Activated CD4-positive, alpha-beta T cell treated with anti-CD3 and anti-CD28 coated beads, Interleukin-2, amount 10 ng/mL, durations not matched to agents 24 days and 14 days (primary cell): ENCODE measurements at regions of chr4 and their contacts with region 1.

Region 1: DNA sequence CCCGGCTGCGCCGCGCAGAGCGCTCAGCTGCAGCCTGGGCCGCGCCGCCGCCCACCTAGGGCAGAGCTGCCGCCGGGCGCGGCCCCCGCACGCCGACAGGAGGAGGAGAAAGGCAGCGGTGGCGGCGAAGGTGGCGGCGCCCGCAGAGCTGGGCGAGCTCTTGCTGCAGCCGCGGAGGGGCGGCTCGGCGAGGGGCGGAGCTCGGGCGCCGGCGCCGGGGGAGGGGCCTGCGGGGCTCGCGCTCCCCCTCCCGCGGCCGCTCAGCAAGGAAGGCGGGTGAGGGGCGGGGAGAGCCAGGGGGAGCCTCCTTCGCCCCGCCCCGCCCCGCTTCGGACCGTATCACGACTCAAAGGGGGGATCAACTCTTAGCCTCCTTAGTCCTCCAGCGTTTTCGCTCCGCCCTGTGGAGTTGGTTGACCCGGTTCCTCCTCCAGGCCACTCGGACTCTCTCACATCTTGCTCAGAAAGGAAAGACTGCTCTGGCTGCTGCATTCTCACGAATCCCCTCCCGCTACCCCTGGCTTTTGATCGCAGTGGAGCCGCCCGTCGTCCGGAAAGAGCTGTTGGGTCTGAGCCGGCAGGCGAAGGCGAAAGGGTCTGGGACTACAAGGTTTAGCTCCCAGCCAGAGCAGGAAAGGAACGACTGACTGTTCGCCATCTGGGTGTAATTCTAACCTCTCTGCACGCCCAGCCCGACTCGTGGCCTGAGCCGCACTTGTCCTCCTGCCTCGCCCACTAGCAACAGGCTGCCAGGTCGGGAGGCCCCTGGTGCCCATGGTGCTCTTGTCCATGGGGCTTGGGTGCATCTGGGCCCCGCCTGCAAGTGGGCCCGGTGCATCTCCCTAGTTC is at the start of gene ATP8A1:
- DNase-seq: peak; percentile 98
- H3K4me3 Mint-ChIP-seq: peak within 1 kb of the TSS; percentile 97
- H3K27ac Mint-ChIP-seq: peak within 1 kb of the TSS; percentile 98
- H3K4me1 Mint-ChIP-seq: peaks cover 42% of the 10 kb centered on the region
- H3K27me3 Mint-ChIP-seq: peaks cover 2% of the 10 kb centered on the region
- total RNA-seq, gene ATP8A1: 21.8 and 24.3 TPM in 2 replicates

Region 2: GRCh38 chr4:42396752-42397634 is 260.2 kb before region 1 on chr4 and contains the start of gene SHISA3:
- intact Hi-C with region 1: loop called (anchors 10 kb)
- DNase-seq: peak; percentile 78
- H3K4me3 Mint-ChIP-seq: peak within 1 kb of the TSS; percentile 85
- H3K27ac Mint-ChIP-seq: no peak within 1 kb of the TSS
- H3K4me1 Mint-ChIP-seq: peaks cover 25% of the 10 kb centered on the region
- H3K27me3 Mint-ChIP-seq: peaks cover 65% of the 10 kb centered on the region
- total RNA-seq, gene SHISA3: 0.09 and 0.23 TPM in 2 replicates

Region 3: DNA sequence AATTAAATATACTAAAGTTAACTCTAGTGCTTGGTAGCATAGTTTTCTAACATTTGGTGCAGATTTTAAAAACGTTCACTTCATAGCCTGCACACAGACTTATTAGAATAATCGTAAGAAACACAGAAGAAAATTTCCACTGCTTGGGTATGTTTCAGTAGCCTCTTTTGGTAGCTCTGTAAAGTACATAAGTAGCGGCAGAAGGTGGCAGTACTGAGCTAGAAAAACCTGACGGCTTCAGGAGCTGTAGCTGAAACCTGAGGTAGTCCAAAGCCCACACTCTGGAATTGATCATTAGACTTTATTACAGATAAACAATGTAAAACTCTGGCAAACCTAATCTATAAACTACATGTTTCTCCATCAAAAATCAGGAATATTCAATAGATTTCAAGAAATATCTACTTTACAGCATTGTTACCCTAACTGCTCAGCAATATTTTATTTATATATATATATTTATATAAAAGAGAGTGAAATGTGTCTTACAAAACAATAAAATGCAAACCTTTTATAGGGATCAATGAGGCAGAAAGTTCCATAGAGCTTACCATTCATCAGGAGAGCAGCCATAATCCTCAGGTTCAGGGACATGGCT is 88.5 kb before region 1 on chr4:
- intact Hi-C with region 1: loop called (anchors 2 kb)
- DNase-seq: peak; percentile 89
- H3K4me3 Mint-ChIP-seq: no peak overlapping the region
- H3K27ac Mint-ChIP-seq: no peak overlapping the region
- H3K4me1 Mint-ChIP-seq: no peaks in the 10 kb centered on the region
- H3K27me3 Mint-ChIP-seq: no peaks in the 10 kb centered on the region

Region 4: GRCh38 chr4:42579903-42580302 is 77.3 kb before region 1 on chr4:
- intact Hi-C with region 1: loop called (anchors 1 kb)
- DNase-seq: no peak
- H3K4me3 Mint-ChIP-seq: no peak overlapping the region
- H3K27ac Mint-ChIP-seq: no peak overlapping the region
- H3K4me1 Mint-ChIP-seq: peaks cover 7% of the 10 kb centered on the region
- H3K27me3 Mint-ChIP-seq: no peaks in the 10 kb centered on the region

Region 5: DNA sequence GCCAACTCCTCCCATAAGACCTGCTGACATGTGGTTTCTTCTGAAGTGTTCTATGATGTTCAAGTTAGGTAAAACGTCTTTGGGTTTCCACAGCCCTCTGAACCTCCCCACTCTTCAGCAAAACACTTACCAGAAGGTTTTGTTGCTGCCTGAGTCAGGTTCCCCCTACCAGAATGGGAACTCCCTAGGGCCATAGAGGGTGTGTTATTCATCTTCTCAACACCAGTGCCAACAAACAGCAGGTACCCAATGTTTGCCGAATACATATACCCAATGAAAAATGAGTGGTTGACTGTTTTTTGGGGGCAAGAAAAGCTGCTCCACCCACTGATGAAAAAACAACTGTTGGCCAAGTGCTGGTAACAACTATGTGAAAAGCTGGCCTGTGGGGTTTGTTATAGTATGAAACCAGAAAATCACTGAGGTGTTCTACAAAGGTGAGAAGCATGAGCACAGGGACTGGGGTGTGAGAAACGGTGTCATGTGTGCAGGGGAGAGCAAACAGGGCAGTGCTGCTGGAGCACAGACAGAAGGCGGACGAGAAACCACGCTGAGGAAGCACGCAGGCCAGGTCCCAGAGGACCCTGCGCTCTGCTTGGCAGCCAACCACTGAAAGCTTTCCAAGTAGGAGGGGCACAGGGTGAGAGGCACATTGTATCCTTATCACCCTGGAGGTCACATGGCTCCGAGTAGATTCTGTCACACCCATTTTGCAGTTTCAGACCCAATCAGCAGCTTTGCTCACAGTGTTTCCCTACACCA is 29.1 kb before region 1 on chr4:
- intact Hi-C with region 1: loop called (anchors 1 kb)
- DNase-seq: peak; percentile 78
- H3K4me3 Mint-ChIP-seq: peak overlapping the region; percentile 65
- H3K27ac Mint-ChIP-seq: peak overlapping the region; percentile 88
- H3K4me1 Mint-ChIP-seq: peaks cover 29% of the 10 kb centered on the region
- H3K27me3 Mint-ChIP-seq: no peaks in the 10 kb centered on the region

Region 6: DNA sequence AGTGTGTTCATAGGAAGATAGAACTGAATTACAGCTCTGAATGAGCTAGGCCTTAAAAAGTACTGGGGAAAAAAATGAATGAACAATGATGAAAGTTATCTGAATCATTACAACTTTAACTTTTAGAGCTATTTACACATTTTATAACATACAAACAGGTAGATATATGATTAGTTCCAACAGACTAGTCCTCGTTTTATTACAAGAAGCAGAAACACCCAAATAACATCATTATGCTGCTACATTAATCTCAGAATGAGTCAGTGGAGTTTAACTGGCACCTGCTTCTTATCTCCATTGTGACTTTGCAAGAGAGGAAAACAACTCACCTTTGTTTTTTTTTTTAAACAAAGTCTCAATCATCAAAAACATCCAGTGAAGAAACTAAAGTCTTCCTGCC is 15.5 kb before region 1 on chr4:
- intact Hi-C with region 1: loop called (anchors 1 kb)
- DNase-seq: no peak
- H3K4me3 Mint-ChIP-seq: peak overlapping the region; percentile 8
- H3K27ac Mint-ChIP-seq: no peak overlapping the region
- H3K4me1 Mint-ChIP-seq: peaks cover 45% of the 10 kb centered on the region
- H3K27me3 Mint-ChIP-seq: no peaks in the 10 kb centered on the region

Region 7: DNA sequence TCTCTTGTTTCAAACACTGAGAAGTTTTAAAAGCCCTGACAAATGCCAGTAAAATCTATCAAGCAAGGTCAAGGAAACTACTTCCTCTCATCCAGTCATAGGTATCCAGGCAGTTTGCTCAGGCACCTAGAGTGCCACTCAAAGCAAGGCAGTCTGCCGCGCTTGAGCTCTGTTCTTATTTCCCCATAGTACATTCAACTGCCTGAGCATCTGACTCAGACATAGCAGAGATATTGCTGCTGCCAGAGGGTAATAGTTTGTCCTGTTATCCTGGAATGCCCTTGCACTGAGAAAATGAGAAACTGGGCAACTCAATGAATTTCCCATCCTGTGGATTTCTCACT is 15.9 kb after region 1 on chr4:
- intact Hi-C with region 1: loop called (anchors 1 kb)
- DNase-seq: no peak
- H3K4me3 Mint-ChIP-seq: peak overlapping the region; percentile 54
- H3K27ac Mint-ChIP-seq: peak overlapping the region; percentile 88
- H3K4me1 Mint-ChIP-seq: peaks cover 33% of the 10 kb centered on the region
- H3K27me3 Mint-ChIP-seq: no peaks in the 10 kb centered on the region